ENCODE measurements at regions of chr5 and their contacts with region 1.

Region 1: DNA sequence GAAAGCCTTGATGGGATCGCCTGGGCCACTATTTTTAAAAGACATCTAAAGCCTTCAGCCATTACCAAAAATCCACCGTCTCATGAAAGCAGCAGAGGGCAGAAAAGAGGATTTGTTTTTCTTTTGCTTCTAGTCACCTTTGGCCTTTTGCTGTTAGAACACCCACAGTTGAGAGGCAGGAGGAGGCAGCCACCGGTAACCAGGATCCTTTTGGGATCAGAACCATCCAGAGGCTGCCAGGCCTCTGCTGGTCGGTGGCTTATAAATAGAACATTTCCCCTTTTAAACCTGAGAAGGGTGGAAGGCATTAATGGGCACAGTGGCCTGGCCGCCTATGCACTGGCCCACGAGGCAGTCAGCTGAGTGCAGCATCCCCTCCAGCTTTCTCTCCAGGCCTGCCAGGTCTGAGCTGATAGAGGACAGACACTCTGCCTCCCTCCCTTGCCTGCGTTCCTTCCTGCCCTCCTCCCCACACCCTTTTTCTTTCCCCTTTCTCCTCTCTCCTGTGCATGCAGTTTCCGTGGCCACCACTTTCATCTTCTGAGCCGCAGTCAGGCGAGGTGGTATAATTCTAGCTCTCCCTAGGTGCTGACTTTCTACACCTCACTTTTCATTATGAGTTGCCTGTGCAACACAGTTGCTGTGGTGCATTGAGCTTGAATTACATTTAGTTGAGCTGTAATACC is 253.4 kb downstream of the ARHGAP26 start:
- DNase-seq: peak; percentile 87
- ATAC-seq: peak; percentile 65
- H3K4me3 ChIP-seq: 0 out of 2 replicates have a peak overlapping the region, but pooled peaks have one; percentile 21
- H3K27ac ChIP-seq: peak overlapping the region; percentile 95
- H3K4me1 ChIP-seq: peaks cover 77% of the 10 kb centered on the region
- H3K27me3 ChIP-seq: no peaks in the 10 kb centered on the region
- CTCF ChIP-seq: no peak; a peak in 1 of 6 replicates
- EP300 ChIP-seq: peak; percentile 52 to 66; a peak in 2 of 4 replicates
- POLR2A ChIP-seq: peak; percentile 60
- RAD21 ChIP-seq: peak; percentile 36

Region 2: GRCh38 chr5:143033535-143034250 is 10.1 kb after region 1 on chr5:
- CTCF ChIA-PET with region 1: interaction called, 15 read pairs
- POLR2A ChIA-PET with region 1: interaction called, 28 read pairs
- RAD21 ChIA-PET with region 1: interaction called, 47 read pairs
- SMC1A ChIA-PET with region 1: interaction called, 95 read pairs
- in situ Hi-C with region 1: no loop called
- intact Hi-C with region 1: loop called (anchors 2 kb)
- DNase-seq: no peak
- ATAC-seq: no peak
- H3K4me3 ChIP-seq: no peak overlapping the region
- H3K27ac ChIP-seq: no peak overlapping the region
- H3K4me1 ChIP-seq: peaks cover 23% of the 10 kb centered on the region
- H3K27me3 ChIP-seq: no peaks in the 10 kb centered on the region
- CTCF ChIP-seq: no peak
- EP300 ChIP-seq: no peak
- POLR2A ChIP-seq: no peak
- RAD21 ChIP-seq: no peak

Region 3: GRCh38 chr5:143057580-143057999 is 34.0 kb after region 1 on chr5:
- CTCF ChIA-PET with region 1: interaction called, 12 read pairs
- POLR2A ChIA-PET with region 1: interaction called, 12 read pairs
- RAD21 ChIA-PET with region 1: interaction called, 337 read pairs
- SMC1A ChIA-PET with region 1: interaction called, 441 read pairs
- in situ Hi-C with region 1: no loop called
- intact Hi-C with region 1: loop called (anchors 2 kb)
- DNase-seq: peak; percentile 85
- ATAC-seq: peak; percentile 59
- H3K4me3 ChIP-seq: peak overlapping the region; percentile 77
- H3K27ac ChIP-seq: peak overlapping the region; percentile 100
- H3K4me1 ChIP-seq: peaks cover 56% of the 10 kb centered on the region
- H3K27me3 ChIP-seq: no peaks in the 10 kb centered on the region
- CTCF ChIP-seq: no peak
- EP300 ChIP-seq: peak; percentile 77 to 89; a peak in 3 of 4 replicates
- POLR2A ChIP-seq: peak; percentile 54; the same call in 1 of the 2 replicates
- RAD21 ChIP-seq: peak; percentile 36; the same call in 1 of the 2 replicates

Region 4: GRCh38 chr5:143119291-143119769 is 95.8 kb after region 1 on chr5:
- CTCF ChIA-PET with region 1: interaction called, 5 read pairs
- POLR2A ChIA-PET with region 1: interaction called, 3 read pairs
- RAD21 ChIA-PET with region 1: interaction called, 17 read pairs
- SMC1A ChIA-PET with region 1: interaction called, 17 read pairs
- in situ Hi-C with region 1: no loop called
- intact Hi-C with region 1: no loop called
- DNase-seq: no peak
- ATAC-seq: peak; percentile 82
- H3K4me3 ChIP-seq: no peak overlapping the region
- H3K27ac ChIP-seq: peak overlapping the region; percentile 35
- H3K4me1 ChIP-seq: peaks cover 23% of the 10 kb centered on the region
- H3K27me3 ChIP-seq: no peaks in the 10 kb centered on the region
- CTCF ChIP-seq: no peak
- EP300 ChIP-seq: no peak
- POLR2A ChIP-seq: no peak
- RAD21 ChIP-seq: no peak

Region 5: DNA sequence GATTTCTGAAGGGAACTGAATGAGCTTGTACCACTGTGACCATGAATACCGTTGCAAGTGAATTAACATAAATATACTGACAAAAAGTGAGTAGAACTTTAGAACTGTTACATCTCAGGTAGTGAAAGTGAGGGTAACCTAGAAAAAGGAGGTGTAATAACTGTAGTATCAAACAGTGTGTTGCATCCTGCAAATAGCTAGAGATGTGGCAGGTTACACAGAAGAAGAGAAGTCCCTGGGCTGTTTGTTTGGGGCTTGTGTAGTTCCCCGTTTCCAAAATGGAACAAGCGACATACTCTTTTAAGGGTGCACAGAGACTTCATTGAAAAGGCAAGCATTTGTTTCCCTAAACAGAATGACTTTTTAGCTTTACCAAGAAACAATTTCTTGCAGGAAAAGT is 165.1 kb after region 1 on chr5:
- CTCF ChIA-PET with region 1: interaction called, 3 read pairs
- POLR2A ChIA-PET with region 1: interaction called, 10 read pairs
- RAD21 ChIA-PET with region 1: interaction called, 35 read pairs
- SMC1A ChIA-PET with region 1: interaction called, 17 read pairs
- in situ Hi-C with region 1: no loop called
- intact Hi-C with region 1: no loop called
- DNase-seq: no peak
- ATAC-seq: peak; percentile 52
- H3K4me3 ChIP-seq: no peak overlapping the region
- H3K27ac ChIP-seq: peak overlapping the region; percentile 66
- H3K4me1 ChIP-seq: peaks cover 47% of the 10 kb centered on the region
- H3K27me3 ChIP-seq: no peaks in the 10 kb centered on the region
- CTCF ChIP-seq: no peak
- EP300 ChIP-seq: 0 out of 4 replicates have a peak, but pooled peaks of 1 of the 2 experiments have one; percentile 11
- POLR2A ChIP-seq: no peak
- RAD21 ChIP-seq: no peak

Region 6: GRCh38 chr5:143213851-143214363 is 190.4 kb after region 1 on chr5:
- CTCF ChIA-PET with region 1: interaction called, 31 read pairs
- POLR2A ChIA-PET with region 1: interaction called, 12 read pairs
- RAD21 ChIA-PET with region 1: interaction called, 53 read pairs
- SMC1A ChIA-PET with region 1: interaction called, 138 read pairs
- in situ Hi-C with region 1: loop called (anchors 5 kb)
- intact Hi-C with region 1: no loop called
- DNase-seq: peak; percentile 97
- ATAC-seq: peak; percentile 68
- H3K4me3 ChIP-seq: peak overlapping the region; percentile 6; the same call in 1 of the 2 replicates
- H3K27ac ChIP-seq: peak overlapping the region; percentile 100
- H3K4me1 ChIP-seq: peaks cover 76% of the 10 kb centered on the region
- H3K27me3 ChIP-seq: no peaks in the 10 kb centered on the region
- CTCF ChIP-seq: peak; percentile 38 to 61 (median 47); a peak in 5 of 6 replicates
- EP300 ChIP-seq: peak; percentile 73 to 82
- POLR2A ChIP-seq: peak; percentile 45
- RAD21 ChIP-seq: peak; percentile 76

Region 7: GRCh38 chr5:144135113-144135762 is 1111.7 kb after region 1 on chr5:
- CTCF ChIA-PET with region 1: no interaction called
- POLR2A ChIA-PET with region 1: no interaction called
- RAD21 ChIA-PET with region 1: no interaction called
- SMC1A ChIA-PET with region 1: no interaction called
- in situ Hi-C with region 1: no loop called
- intact Hi-C with region 1: no loop called
- DNase-seq: no peak
- ATAC-seq: peak; percentile 26; the same call in 1 of the 3 replicates
- H3K4me3 ChIP-seq: no peak overlapping the region
- H3K27ac ChIP-seq: no peak overlapping the region
- H3K4me1 ChIP-seq: no peaks in the 10 kb centered on the region
- H3K27me3 ChIP-seq: no peaks in the 10 kb centered on the region
- CTCF ChIP-seq: no peak
- EP300 ChIP-seq: no peak
- POLR2A ChIP-seq: no peak
- RAD21 ChIP-seq: no peak

Measured in GM12878 (cell line).